WTC11 (cell line): ENCODE measurements at regions of chr2 and their contacts with region 1.

Region 1: GRCh38 chr2:1550658-1551316 is 137.5 kb downstream of the TPO start:
- DNase-seq: peak; percentile 80
- ATAC-seq: peak; percentile 81
- H3K4me3 Mint-ChIP-seq: no peak overlapping the region
- H3K27ac Mint-ChIP-seq: no peak overlapping the region
- H3K4me1 Mint-ChIP-seq: 0 out of 2 replicates have a peak, but pooled peaks cover 5% of the 10 kb centered on the region
- H3K27me3 Mint-ChIP-seq: no peaks in the 10 kb centered on the region; the same call in none of the 2 replicates
- CTCF ChIP-seq: peak; percentile 98

Region 2: GRCh38 chr2:1561811-1562421 is 11.1 kb after region 1 on chr2:
- CTCF ChIA-PET with region 1: interaction called, 16 read pairs
- POLR2A ChIA-PET with region 1: no interaction called
- DNase-seq: no peak
- ATAC-seq: peak; percentile 24; the same call in 1 of the 2 replicates
- H3K4me3 Mint-ChIP-seq: no peak overlapping the region
- H3K27ac Mint-ChIP-seq: no peak overlapping the region
- H3K4me1 Mint-ChIP-seq: peaks cover 12% of the 10 kb centered on the region
- H3K27me3 Mint-ChIP-seq: no peaks in the 10 kb centered on the region
- CTCF ChIP-seq: no peak